Activated B cell treated with CpG ODN at 0.5 μM for 24 hours (primary cell): ENCODE measurements at regions of chr2 and their contacts with region 1.

Region 1: DNA sequence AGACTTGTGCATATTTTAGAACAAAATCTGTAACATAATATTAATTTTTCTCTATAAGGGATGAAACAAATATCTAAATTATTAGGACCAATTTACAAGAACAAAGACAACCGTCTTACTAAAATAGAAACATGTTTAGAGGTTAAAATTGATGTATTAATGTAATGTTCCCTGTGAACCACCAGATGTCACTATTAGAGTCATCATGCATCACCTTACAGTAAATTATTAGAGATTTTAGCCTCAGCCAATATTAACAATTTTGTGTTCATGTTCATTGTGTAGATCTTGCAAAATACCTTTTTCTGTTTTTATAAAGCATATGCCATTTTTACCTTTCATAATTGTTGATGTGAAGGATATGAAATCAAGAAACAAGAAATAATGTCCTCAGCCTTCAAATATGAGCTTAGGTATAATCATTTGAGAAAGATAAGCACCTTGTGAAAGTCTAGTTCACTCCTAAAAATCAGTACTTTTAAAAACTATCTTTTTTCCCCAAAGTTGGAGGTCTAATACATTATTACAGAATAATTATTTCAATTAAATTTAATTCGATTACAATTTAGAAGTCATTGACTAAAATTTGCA is 344.3 kb upstream of the KCNH7 start:
- DNase-seq: no peak
- ATAC-seq: no peak
- H3K4me3 Mint-ChIP-seq: no peak overlapping the region
- H3K27ac Mint-ChIP-seq: no peak overlapping the region
- H3K4me1 Mint-ChIP-seq: no peaks in the 10 kb centered on the region
- H3K27me3 Mint-ChIP-seq: no peaks in the 10 kb centered on the region
- CTCF ChIP-seq: no peak

Region 2: GRCh38 chr2:164044637-164045036 is 861.8 kb after region 1 on chr2:
- CTCF ChIA-PET with region 1: no interaction called
- POLR2A ChIA-PET with region 1: no interaction called
- intact Hi-C with region 1: no loop called
- DNase-seq: no peak
- ATAC-seq: no peak
- H3K4me3 Mint-ChIP-seq: no peak overlapping the region
- H3K27ac Mint-ChIP-seq: no peak overlapping the region
- H3K4me1 Mint-ChIP-seq: no peaks in the 10 kb centered on the region
- H3K27me3 Mint-ChIP-seq: no peaks in the 10 kb centered on the region
- CTCF ChIP-seq: no peak

Region 3: DNA sequence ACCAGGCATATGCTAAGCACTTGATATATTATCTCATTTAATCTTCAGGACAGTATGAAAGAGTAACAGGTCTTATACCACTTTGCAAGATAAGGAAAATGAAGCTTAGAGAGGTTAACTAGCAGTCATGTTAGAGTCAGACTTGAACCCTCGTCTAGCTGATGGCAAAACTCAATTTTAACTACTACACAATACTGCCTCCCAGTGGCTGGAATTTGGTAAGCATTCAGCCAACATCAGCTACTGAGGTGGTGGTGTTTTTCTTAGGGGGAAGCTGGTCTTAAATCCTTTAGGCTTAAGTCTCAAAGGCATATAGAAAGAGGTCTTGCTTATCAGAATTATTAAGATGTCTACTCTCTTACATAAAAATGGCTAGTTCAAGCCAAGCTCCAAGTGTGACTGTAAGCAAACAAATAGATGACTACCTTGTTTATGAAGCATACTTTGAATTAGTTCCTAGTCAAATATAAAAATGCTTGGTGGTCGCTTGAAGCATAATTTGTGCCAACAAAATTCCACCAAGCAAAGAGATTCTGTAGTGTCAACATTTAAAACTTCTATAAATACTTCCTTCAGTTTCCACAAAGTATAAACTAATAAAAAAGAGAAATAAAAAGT is 878.4 kb after region 1 on chr2:
- CTCF ChIA-PET with region 1: no interaction called
- POLR2A ChIA-PET with region 1: no interaction called
- intact Hi-C with region 1: loop called (anchors 1 kb)
- DNase-seq: no peak
- ATAC-seq: no peak
- H3K4me3 Mint-ChIP-seq: no peak overlapping the region
- H3K27ac Mint-ChIP-seq: no peak overlapping the region
- H3K4me1 Mint-ChIP-seq: no peaks in the 10 kb centered on the region
- H3K27me3 Mint-ChIP-seq: no peaks in the 10 kb centered on the region
- CTCF ChIP-seq: no peak

Region 4: DNA sequence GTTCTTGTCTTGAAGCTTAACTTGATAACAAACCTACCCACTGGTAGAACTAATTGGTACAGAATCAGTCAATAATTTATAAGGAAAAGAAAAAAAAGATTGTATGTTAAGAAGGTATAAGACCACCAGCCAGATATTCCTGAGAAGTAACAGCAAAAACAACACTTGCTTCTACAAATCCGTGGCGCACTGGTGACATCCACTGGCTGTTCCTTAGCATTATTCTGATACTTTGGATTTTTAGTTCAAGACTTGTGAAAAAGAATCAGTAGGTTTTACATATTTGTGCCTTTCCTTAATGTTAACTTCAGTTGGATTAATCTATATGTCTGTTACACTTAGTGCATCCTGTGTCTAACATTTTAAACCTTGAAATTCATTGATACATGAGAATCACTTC is 1296.6 kb after region 1 on chr2:
- CTCF ChIA-PET with region 1: no interaction called
- POLR2A ChIA-PET with region 1: no interaction called
- intact Hi-C with region 1: loop called (anchors 5 kb)
- DNase-seq: no peak
- ATAC-seq: no peak
- H3K4me3 Mint-ChIP-seq: no peak overlapping the region
- H3K27ac Mint-ChIP-seq: no peak overlapping the region
- H3K4me1 Mint-ChIP-seq: no peaks in the 10 kb centered on the region
- H3K27me3 Mint-ChIP-seq: no peaks in the 10 kb centered on the region
- CTCF ChIP-seq: no peak

Region 5: GRCh38 chr2:164538240-164538866 is 1355.5 kb after region 1 on chr2:
- CTCF ChIA-PET with region 1: no interaction called
- POLR2A ChIA-PET with region 1: no interaction called
- intact Hi-C with region 1: loop called (anchors 1 kb)
- DNase-seq: no peak
- ATAC-seq: no peak
- H3K4me3 Mint-ChIP-seq: no peak overlapping the region
- H3K27ac Mint-ChIP-seq: no peak overlapping the region
- H3K4me1 Mint-ChIP-seq: no peaks in the 10 kb centered on the region
- H3K27me3 Mint-ChIP-seq: peaks cover 2% of the 10 kb centered on the region
- CTCF ChIP-seq: no peak

Region 6: GRCh38 chr2:164599966-164600589 is 1417.2 kb after region 1 on chr2:
- CTCF ChIA-PET with region 1: no interaction called
- POLR2A ChIA-PET with region 1: no interaction called
- intact Hi-C with region 1: loop called (anchors 10 kb)
- DNase-seq: no peak
- ATAC-seq: no peak
- H3K4me3 Mint-ChIP-seq: no peak overlapping the region
- H3K27ac Mint-ChIP-seq: no peak overlapping the region
- H3K4me1 Mint-ChIP-seq: no peaks in the 10 kb centered on the region
- H3K27me3 Mint-ChIP-seq: peaks cover 17% of the 10 kb centered on the region
- CTCF ChIP-seq: no peak